ENCODE measurements at regions of chr22 and their contacts with region 1.

Region 1: GRCh38 chr22:20016734-20017621 is at the start of gene ARVCF:
- DNase-seq: peak; percentile 95
- ATAC-seq: peak; percentile 67
- total RNA-seq, gene ARVCF: 30.5 TPM

Region 2: GRCh38 chr22:19730655-19731360 is 286.2 kb before region 1 on chr22:
- intact Hi-C with region 1: loop called (anchors 5 kb)
- DNase-seq: peak; percentile 91
- ATAC-seq: peak; percentile 90

Region 3: GRCh38 chr22:19970479-19971275 is 46.3 kb before region 1 on chr22:
- intact Hi-C with region 1: loop called (anchors 1 kb)
- DNase-seq: peak; percentile 83
- ATAC-seq: peak; percentile 76

Region 4: DNA sequence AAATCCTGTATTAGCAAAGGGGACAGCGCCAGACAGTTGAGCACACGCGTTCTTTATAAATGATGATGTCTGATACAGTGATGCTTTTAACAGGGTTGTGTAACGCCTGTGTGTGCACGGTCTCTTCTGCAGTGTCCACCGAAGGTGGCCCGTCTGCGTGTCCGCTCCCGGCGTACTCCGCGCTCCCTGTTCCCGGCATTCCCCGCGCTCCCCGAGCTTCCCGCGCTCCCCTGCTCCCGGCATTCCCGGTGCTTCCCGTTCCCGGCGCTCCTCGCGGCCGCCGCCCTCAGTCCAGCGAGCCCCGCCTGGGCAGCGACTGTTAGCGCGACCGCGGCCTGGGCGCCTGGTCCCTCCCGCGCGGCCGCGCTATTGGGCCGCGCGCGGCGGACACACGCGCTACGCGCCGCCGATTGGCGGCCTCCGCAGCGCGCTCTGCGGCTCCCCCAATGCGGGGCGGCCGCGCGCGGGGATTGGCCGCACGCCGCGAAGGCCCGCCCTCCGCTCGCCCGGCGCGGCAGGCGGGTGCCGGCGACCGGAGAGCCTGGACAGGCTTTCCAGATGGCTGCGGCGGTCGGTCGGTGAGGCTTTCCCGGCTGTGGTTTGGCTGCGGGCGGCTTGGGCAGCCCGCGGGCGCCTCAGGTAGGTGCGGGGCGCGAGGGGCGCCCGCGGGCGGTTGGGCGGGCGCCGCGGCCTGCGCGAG is 62.9 kb after region 1 on chr22 and contains the start of gene DGCR8:
- intact Hi-C with region 1: loop called (anchors 5 kb)
- DNase-seq: peak; percentile 96
- ATAC-seq: peak; percentile 98
- total RNA-seq, gene DGCR8: 18.0 TPM

Region 5: GRCh38 chr22:20093418-20094196 is 76.6 kb after region 1 on chr22:
- intact Hi-C with region 1: no loop called
- DNase-seq: peak; percentile 76
- ATAC-seq: peak; percentile 98

Region 6: GRCh38 chr22:20130739-20131596 is 114.0 kb after region 1 on chr22:
- intact Hi-C with region 1: loop called (anchors 5 kb)
- DNase-seq: peak; percentile 96
- ATAC-seq: peak; percentile 92